HEK293 (cell line): ENCODE measurements at regions of chr16 and their contacts with region 1.

Region 1: DNA sequence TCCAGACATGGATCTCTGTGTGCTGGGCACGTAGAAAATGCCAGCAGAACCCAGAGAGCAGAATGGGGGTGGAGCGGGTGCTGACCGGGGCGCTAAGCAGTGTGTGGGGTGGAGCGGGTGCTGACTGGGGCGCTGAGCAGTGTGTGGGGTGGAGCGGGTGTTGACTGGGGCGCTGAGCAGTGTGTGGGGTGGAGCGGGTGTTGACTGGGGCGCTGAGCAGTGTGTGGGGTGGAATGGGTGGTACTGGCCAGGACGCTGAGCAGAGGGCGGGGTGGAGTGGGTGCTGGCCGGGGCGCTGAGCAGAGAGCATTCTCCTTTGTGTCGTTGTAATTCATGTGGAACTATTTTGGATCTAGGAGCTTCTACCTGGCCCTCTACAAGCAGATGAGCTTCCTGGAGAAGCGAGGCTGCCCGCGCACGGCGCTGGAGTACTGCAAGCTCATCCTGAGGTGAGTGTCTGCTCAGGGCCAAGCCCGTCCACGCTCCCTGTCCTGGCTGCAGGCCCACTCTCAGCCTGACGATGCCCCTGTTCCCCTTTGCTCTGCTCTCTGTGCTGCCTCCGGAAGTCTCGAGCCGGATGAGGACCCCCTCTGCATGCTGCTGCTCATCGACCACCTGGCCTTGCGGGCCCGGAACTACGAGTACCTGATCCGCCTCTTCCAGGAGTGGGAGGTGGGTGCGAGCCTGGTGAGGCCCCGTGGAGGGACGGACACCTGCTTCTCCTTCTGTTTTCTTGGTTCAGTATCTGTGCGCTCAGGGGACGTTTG is 20.3 kb upstream of the MC1R start:
- H3K4me3 ChIP-seq: no peak overlapping the region
- H3K27ac ChIP-seq: no peak overlapping the region
- H3K4me1 ChIP-seq: no peaks in the 10 kb centered on the region
- CTCF ChIP-seq: no peak

Region 2: DNA sequence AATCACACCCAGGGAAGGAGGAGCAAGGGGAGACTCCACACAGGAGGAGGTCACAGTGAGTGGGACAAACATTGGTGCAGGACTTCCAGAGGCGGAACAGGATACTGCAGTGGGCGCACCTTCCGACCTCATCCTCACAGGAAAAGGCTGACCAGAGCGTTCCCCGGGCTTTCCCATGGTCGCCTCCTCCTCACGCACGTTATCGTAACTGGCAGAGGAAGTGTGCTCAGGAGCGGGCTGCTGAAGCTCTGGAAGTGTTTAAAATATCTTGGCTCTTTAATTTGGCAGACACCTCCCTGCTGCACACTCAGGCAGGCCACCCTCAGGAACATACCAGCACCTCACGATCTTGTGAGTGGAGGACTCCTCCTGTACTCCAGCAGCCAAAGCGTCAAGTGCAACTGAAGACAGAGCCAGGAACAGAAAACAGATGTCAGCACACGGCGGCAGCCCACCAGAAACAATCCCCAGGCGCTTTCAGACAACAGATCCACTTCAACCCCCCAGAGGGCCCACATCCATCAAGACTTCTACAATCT is 99.5 kb before region 1 on chr16:
- CTCF ChIA-PET with region 1: no interaction called
- POLR2A ChIA-PET with region 1: no interaction called
- H3K4me3 ChIP-seq: no peak overlapping the region
- H3K27ac ChIP-seq: no peak overlapping the region
- H3K4me1 ChIP-seq: no peaks in the 10 kb centered on the region
- CTCF ChIP-seq: no peak

Region 3: GRCh38 chr16:89831810-89832328 is 66.5 kb before region 1 on chr16:
- CTCF ChIA-PET with region 1: no interaction called
- POLR2A ChIA-PET with region 1: no interaction called
- H3K4me3 ChIP-seq: no peak overlapping the region
- H3K27ac ChIP-seq: no peak overlapping the region
- H3K4me1 ChIP-seq: peaks cover 9% of the 10 kb centered on the region
- CTCF ChIP-seq: no peak

Region 4: GRCh38 chr16:89909777-89910716 is 11.7 kb after region 1 on chr16:
- CTCF ChIA-PET with region 1: interaction called, 13 read pairs
- POLR2A ChIA-PET with region 1: no interaction called
- H3K4me3 ChIP-seq: no peak overlapping the region
- H3K27ac ChIP-seq: no peak overlapping the region
- H3K4me1 ChIP-seq: no peaks in the 10 kb centered on the region
- CTCF ChIP-seq: peak; percentile 79